ENCODE measurements at regions of chr3 and their contacts with region 1.

Region 1: GRCh38 chr3:38843898-38844297 is 27.9 kb upstream of the SCN10A start:
- DNase-seq: no peak
- ATAC-seq: peak; percentile 75 to 81
- H3K4me3 ChIP-seq: no peak overlapping the region
- H3K27ac ChIP-seq: no peak overlapping the region
- H3K4me1 ChIP-seq: no peaks in the 10 kb centered on the region
- H3K27me3 ChIP-seq: no peaks in the 10 kb centered on the region

Region 2: DNA sequence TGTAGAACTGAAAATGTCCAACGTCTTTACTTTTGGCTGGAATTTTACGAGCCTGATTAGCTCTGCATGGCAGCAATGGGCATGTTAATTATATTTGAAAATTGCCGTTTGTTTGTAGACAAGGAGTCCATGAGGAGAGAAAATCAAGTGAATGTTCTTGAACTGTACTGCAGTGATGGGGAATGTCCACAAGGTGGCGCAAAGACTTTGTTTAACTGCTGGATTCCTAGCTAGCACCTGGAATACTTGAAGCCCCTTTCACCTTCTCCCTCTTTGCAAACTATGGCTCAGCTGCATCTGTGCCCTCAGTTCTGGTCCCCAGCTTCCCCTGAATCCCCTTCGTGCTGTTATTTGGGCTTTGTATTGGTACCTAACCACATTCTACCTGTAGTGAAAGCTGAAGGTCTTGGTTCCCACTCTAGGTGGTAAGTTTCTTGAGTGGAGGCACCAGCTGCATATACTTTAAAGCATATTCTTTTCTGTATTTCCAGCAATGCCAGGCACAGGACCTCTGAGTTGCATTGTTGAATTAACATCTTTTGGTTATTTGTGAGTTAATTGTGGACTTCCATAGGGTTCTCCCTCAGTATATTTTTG is 322.4 kb before region 1 on chr3:
- intact Hi-C with region 1: loop called (anchors 5 to 10 kb)
- DNase-seq: peak; percentile 45 to 67 (median 47)
- ATAC-seq: peak; percentile 40 to 61
- H3K4me3 ChIP-seq: no peak overlapping the region
- H3K27ac ChIP-seq: no peak overlapping the region
- H3K4me1 ChIP-seq: peaks cover 2% of the 10 kb centered on the region
- H3K27me3 ChIP-seq: no peaks in the 10 kb centered on the region

Region 3: GRCh38 chr3:38689774-38690173 is 154.1 kb before region 1 on chr3:
- intact Hi-C with region 1: loop called in 2 of 4 experiments (anchors 10 kb)
- DNase-seq: no peak
- ATAC-seq: peak in 1 of 2 donors; percentile 52
- H3K4me3 ChIP-seq: no peak overlapping the region
- H3K27ac ChIP-seq: no peak overlapping the region
- H3K4me1 ChIP-seq: no peaks in the 10 kb centered on the region
- H3K27me3 ChIP-seq: no peaks in the 10 kb centered on the region

Region 4: DNA sequence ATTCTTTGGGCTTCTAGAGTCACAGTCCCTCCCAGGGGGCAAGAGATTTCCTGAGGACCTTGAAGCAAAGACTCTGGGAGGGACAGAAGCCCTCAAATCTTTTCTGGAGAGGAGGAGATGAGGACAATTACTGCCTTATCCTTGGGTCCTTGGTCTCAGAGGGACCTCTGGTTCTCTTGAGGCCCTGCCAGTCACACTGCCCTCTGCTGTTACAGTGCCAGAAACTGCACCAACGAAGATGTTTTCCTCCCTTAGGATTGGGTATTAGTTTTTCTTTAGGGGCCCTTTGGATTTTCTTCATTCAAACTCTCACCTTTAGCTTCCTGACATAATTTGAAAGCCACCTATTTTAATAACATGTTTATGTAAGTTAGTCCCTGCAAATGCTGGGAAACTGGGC is 136.2 kb before region 1 on chr3:
- intact Hi-C with region 1: loop called in 1 of 4 experiments (anchors 10 kb)
- DNase-seq: no peak
- ATAC-seq: no peak
- H3K4me3 ChIP-seq: no peak overlapping the region
- H3K27ac ChIP-seq: no peak overlapping the region
- H3K4me1 ChIP-seq: no peaks in the 10 kb centered on the region
- H3K27me3 ChIP-seq: no peaks in the 10 kb centered on the region

Region 5: GRCh38 chr3:38738630-38739395 is 105.1 kb before region 1 on chr3:
- intact Hi-C with region 1: loop called in 1 of 4 experiments (anchors 5 kb)
- DNase-seq: peak in 1 of 3 donors; percentile 53
- ATAC-seq: peak; percentile 29 to 59
- H3K4me3 ChIP-seq: no peak overlapping the region
- H3K27ac ChIP-seq: no peak overlapping the region
- H3K4me1 ChIP-seq: no peaks in the 10 kb centered on the region
- H3K27me3 ChIP-seq: no peaks in the 10 kb centered on the region